ENCODE measurements at regions of chr14 and their contacts with region 1.

Region 1: DNA sequence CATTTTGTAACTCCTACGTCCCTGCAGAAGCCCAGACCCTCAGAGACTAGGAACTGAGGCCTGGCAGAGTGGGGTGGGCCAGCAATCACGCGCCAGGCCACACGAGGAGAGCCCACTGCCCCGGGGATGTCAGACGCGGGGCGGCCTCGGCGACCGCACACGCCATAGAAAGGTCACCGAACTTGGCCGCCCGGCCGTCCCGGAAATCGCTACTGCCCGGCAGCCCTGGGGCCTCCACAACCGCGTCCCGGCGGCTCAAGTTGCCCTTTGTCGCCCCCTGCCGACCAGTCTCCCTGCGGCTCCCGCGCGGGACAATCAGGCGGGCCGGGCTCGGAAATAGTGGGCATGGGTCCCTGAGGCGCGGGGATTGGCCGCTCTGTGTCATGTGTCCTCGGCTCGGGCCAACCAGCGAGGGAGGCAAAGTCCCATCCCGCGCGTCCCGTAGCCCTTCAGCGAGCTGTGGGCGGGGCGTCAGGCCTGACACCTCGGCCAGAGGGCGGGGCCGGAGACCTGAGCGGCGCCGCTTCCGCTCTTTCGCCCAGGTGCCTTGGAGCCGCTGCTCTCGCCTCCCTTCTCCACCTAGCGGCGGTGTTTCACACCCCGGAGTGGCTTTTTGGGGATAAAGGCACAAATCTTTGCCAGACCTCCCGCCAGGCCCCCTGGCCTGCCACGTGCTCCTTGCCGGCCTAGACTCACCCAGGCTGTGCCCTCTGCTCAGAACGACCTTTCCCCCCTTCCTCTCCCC is 33.4 kb upstream of the DEGS2 start:
- DNase-seq: peak; percentile 100
- H3K4me3 ChIP-seq: peak overlapping the region; percentile 65
- H3K27ac ChIP-seq: peak overlapping the region; percentile 48
- H3K4me1 ChIP-seq: peaks cover 17% of the 10 kb centered on the region
- CTCF ChIP-seq: peak; percentile 84

Region 2: DNA sequence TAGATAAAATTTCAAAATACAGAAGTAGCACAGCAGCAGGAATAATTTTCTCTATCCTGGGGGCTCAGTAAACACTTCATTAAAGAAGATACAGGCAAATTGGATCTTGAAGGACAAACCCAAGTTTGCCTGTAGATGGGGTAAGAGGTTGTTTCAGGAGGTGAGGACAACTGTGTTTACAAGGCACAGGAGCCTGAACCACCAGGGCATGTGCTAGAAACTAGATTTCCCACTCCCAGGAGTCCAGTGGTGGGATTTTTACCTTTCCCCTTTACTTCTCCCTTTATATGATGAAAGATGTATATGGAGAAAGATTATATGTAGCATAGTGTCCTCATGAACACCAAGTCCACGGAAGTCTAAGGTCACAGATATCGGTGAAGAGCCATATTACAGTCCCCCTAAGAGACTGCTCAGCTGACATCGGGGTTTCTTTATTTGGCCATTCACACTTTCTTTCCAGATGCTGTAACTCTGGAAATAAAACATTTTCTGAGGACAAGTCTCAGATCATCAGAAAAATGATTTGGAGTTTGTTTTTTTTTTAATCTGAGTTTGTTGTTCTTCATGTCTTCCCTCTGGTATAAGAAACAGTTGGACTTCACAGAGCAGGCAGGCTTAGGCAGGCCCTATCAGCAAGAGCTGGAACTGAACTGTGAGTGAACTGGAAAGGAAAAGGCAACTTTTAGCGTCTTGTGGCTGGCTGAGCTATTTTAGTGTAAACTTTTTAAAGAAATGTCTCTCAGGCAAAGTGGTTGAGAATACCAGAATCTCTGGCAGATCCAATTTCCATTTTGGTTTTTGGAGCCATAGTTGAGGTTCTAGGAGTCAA is 135.7 kb before region 1 on chr14:
- CTCF ChIA-PET with region 1: interaction called, 4 read pairs
- POLR2A ChIA-PET with region 1: no interaction called
- intact Hi-C with region 1: loop called (anchors 2 kb)
- DNase-seq: peak; percentile 58
- H3K4me3 ChIP-seq: no peak overlapping the region
- H3K27ac ChIP-seq: no peak overlapping the region
- H3K4me1 ChIP-seq: peaks cover 11% of the 10 kb centered on the region
- CTCF ChIP-seq: peak; percentile 76

Region 3: GRCh38 chr14:100071545-100071944 is 121.3 kb before region 1 on chr14:
- CTCF ChIA-PET with region 1: no interaction called
- POLR2A ChIA-PET with region 1: no interaction called
- intact Hi-C with region 1: no loop called
- DNase-seq: peak; percentile 68
- H3K4me3 ChIP-seq: peak overlapping the region; percentile 18
- H3K27ac ChIP-seq: peak overlapping the region; percentile 99
- H3K4me1 ChIP-seq: peaks cover 72% of the 10 kb centered on the region
- CTCF ChIP-seq: no peak

Region 4: GRCh38 chr14:100108042-100108825 is 84.6 kb before region 1 on chr14:
- CTCF ChIA-PET with region 1: no interaction called
- POLR2A ChIA-PET with region 1: no interaction called
- intact Hi-C with region 1: loop called (anchors 1 kb)
- DNase-seq: peak; percentile 73
- H3K4me3 ChIP-seq: no peak overlapping the region
- H3K27ac ChIP-seq: no peak overlapping the region
- H3K4me1 ChIP-seq: peaks cover 8% of the 10 kb centered on the region
- CTCF ChIP-seq: peak; percentile 89

Region 5: DNA sequence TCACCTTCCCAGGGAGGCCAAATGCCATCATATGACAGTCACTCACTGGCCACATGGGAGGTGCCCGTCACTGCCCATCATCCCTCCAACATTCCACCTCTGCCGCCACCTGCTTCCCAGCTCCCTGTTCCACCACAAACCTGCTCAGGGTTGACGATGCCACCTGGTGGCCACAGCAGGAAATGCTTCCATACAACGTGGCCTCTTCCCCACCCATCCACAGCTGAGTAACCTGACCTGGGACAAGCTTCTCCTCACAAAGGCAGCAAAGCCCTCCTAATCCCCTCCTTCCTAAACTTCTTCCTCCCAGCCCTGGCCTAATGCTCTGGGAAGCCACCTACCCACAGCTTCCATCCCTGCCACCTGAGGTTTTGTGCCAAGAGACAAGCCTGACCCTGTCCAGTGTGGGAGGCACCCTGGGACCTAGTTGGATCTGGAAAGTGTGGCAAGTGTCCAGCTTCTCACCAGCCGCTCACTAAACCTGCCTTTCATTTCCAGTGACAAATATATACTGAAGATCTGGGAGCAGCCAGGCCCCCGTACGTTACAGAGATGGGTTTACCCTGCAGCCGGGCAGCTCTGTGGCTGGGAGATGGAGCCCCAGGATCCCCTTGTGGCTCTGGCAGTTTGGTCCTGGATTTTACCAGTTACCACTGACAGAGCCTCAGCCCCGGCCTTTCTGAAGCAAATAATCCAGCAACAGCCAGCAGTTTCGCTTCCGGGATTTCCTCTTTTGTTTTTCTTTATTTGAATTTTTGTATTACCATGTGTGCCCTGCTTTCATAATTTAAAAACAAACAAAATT is 37.6 kb before region 1 on chr14:
- CTCF ChIA-PET with region 1: interaction called, 9 read pairs
- POLR2A ChIA-PET with region 1: interaction called, 7 read pairs
- intact Hi-C with region 1: loop called (anchors 1 kb)
- DNase-seq: peak; percentile 54
- H3K4me3 ChIP-seq: no peak overlapping the region
- H3K27ac ChIP-seq: no peak overlapping the region
- H3K4me1 ChIP-seq: peaks cover 32% of the 10 kb centered on the region
- CTCF ChIP-seq: peak; percentile 91